Ascending aorta (tissue), 2 donors: ENCODE measurements at regions of chr1 and their contacts with region 1.

Region 1: GRCh38 chr1:12019858-12020509 is 686 bp downstream of the MIIP start:
- DNase-seq: no peak
- H3K4me3 ChIP-seq: peak overlapping the region; percentile 85 to 98
- H3K27ac ChIP-seq: peak overlapping the region; percentile 70 to 81
- H3K4me1 ChIP-seq: peaks cover 0 to 6% of the 10 kb centered on the region in 2 donors
- H3K27me3 ChIP-seq: no peaks in the 10 kb centered on the region
- CTCF ChIP-seq: no peak

Region 2: GRCh38 chr1:11925938-11926292 is 94.1 kb before region 1 on chr1:
- intact Hi-C with region 1: loop called (anchors 1 kb)
- DNase-seq: no peak
- H3K4me3 ChIP-seq: peak overlapping the region; percentile 69 to 81
- H3K27ac ChIP-seq: peak overlapping the region in 1 of 2 donors; percentile 37
- H3K4me1 ChIP-seq: peaks cover 21 to 44% of the 10 kb centered on the region in 2 donors
- H3K27me3 ChIP-seq: no peaks in the 10 kb centered on the region
- CTCF ChIP-seq: no peak

Region 3: GRCh38 chr1:11979851-11980675 is 39.9 kb before region 1 on chr1 and contains the start of gene MFN2:
- intact Hi-C with region 1: loop called (anchors 1 kb)
- DNase-seq: peak; percentile 87 to 97
- H3K4me3 ChIP-seq: peak within 1 kb of the TSS; percentile 91 to 92
- H3K27ac ChIP-seq: peak within 1 kb of the TSS; percentile 89 to 95
- H3K4me1 ChIP-seq: peaks cover 0 to 11% of the 10 kb centered on the region in 2 donors
- H3K27me3 ChIP-seq: no peaks in the 10 kb centered on the region
- CTCF ChIP-seq: no peak
- total RNA-seq, gene MFN2: 85.6 TPM

Region 4: DNA sequence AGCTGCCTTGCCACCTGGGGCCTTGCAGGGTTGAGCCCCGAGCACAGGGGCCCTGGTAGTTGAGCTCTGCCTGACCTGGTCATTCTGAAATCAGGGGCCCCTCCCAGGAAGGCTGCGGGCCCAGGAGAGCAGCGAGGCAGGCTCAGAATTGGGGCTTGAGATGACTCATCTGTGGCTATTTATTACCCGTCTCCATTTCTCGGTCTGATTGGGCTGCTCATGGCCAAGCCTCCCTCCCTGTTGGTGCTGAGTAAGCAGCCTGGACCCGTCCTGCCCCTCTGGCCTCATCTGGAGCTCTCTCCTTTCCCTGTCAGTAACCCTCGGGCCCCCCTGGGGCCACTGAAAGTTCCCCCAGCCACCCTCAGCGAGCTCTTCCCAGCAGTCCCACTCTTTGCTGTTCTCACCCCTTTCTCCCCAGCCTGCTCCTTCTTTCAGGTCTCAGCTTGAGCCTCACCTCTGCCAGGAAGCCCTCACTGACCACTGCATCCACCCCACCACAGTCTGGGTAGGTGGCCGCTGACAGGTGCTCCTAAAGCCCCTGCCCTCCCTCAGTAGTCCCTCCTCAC is 32.1 kb after region 1 on chr1:
- intact Hi-C with region 1: loop called (anchors 1 kb)
- DNase-seq: peak; percentile 45 to 89
- H3K4me3 ChIP-seq: peak overlapping the region; percentile 6 to 9
- H3K27ac ChIP-seq: peak overlapping the region; percentile 35 to 64
- H3K4me1 ChIP-seq: peaks cover 10 to 12% of the 10 kb centered on the region in 2 donors
- H3K27me3 ChIP-seq: no peaks in the 10 kb centered on the region
- CTCF ChIP-seq: no peak